Testis (tissue), 5 donors: ENCODE measurements at regions of chr1 and their contacts with region 1.

Region 1: GRCh38 chr1:112501810-112502641 is 6.7 kb upstream of the WNT2B start:
- DNase-seq: peak; percentile 86
- H3K4me3 ChIP-seq: peak overlapping the region; percentile 41 to 69
- H3K27ac ChIP-seq: peak overlapping the region; percentile 12 to 68
- H3K4me1 ChIP-seq: peaks cover 44% of the 10 kb centered on the region
- H3K27me3 ChIP-seq: no peaks in the 10 kb centered on the region
- CTCF ChIP-seq: peak; percentile 52 to 72 (median 71)
- POLR2A ChIP-seq: no peak

Region 2: DNA sequence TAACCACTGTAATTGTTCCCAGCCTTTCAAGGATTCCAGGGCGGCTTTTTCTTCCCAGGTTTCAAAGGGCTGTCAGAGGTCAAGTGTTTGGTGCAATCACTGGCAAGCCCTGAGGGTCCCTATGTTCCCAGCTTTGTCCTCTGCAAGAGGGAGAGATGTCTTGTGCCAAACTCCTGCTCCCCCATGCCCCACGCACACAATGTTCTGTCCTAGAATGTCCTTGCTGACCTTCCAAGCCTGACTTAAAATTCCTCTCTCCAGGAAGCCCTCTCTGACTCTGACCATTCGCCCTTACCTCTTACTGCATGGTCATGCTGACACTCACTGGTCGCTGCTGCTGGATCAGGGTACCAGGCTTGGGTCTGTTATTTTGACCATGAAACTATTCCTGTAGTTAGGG is 360.1 kb before region 1 on chr1:
- intact Hi-C with region 1: no loop called
- DNase-seq: peak; percentile 61
- H3K4me3 ChIP-seq: no peak overlapping the region
- H3K27ac ChIP-seq: no peak overlapping the region
- H3K4me1 ChIP-seq: peaks cover 18% of the 10 kb centered on the region
- H3K27me3 ChIP-seq: no peaks in the 10 kb centered on the region
- CTCF ChIP-seq: no peak
- POLR2A ChIP-seq: no peak

Region 3: GRCh38 chr1:112402682-112403643 is 99.1 kb before region 1 on chr1:
- intact Hi-C with region 1: no loop called
- DNase-seq: no peak
- H3K4me3 ChIP-seq: no peak overlapping the region
- H3K27ac ChIP-seq: no peak overlapping the region
- H3K4me1 ChIP-seq: no peaks in the 10 kb centered on the region
- H3K27me3 ChIP-seq: no peaks in the 10 kb centered on the region
- CTCF ChIP-seq: no peak
- POLR2A ChIP-seq: no peak

Region 4: GRCh38 chr1:112619520-112620376 is 117.7 kb after region 1 on chr1 and contains the start of gene CAPZA1:
- intact Hi-C with region 1: loop called (anchors 5 kb)
- DNase-seq: peak; percentile 95
- H3K4me3 ChIP-seq: peak within 1 kb of the TSS; percentile 81 to 87
- H3K27ac ChIP-seq: peak within 1 kb of the TSS; percentile 95 to 97
- H3K4me1 ChIP-seq: peaks cover 22% of the 10 kb centered on the region
- H3K27me3 ChIP-seq: no peaks in the 10 kb centered on the region
- CTCF ChIP-seq: no peak
- POLR2A ChIP-seq: no peak
- total RNA-seq, gene CAPZA1: 144 to 148 TPM